ENCODE measurements at regions of chr15 and their contacts with region 1.

Region 1: DNA sequence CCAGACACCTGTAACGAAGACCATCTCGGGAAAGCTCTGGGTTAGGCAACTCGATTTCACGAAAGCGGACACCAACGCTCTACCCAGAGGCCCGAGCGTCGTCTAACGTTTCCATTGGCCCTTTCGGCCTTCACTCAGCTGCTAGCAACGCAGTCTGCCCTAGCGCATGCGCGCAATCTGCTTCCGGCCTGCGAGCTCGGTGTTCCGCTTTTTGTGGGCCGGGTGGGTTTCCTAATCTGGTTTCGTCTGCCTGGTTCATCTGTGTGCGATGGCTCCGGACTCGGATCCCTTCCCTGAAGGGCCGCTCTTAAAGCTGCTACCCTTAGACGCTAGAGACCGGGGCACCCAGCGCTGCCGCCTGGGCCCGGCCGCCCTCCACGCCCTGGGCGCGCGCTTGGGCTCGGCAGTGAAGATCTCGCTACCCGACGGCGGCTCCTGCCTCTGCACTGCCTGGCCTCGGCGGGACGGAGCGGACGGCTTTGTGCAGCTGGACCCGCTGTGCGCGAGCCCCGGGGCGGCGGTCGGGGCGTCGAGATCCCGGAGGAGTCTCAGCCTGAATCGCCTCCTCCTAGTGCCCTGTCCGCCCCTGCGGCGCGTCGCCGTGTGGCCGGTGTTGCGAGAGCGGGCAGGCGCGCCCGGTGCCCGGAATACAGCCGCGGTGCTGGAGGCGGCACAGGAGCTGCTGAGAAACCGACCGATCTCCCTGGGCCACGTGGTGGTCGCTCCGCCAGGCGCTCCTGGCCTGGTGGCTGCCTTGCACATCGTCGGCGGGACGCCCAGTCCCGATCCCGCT is 24.0 kb upstream of the GATM start:
- DNase-seq: peak; percentile 98
- ATAC-seq: peak; percentile 96
- H3K4me3 Mint-ChIP-seq: peak overlapping the region; percentile 97
- H3K27ac Mint-ChIP-seq: peak overlapping the region; percentile 86
- H3K4me1 Mint-ChIP-seq: peaks cover 29% of the 10 kb centered on the region
- H3K27me3 Mint-ChIP-seq: no peaks in the 10 kb centered on the region

Region 2: DNA sequence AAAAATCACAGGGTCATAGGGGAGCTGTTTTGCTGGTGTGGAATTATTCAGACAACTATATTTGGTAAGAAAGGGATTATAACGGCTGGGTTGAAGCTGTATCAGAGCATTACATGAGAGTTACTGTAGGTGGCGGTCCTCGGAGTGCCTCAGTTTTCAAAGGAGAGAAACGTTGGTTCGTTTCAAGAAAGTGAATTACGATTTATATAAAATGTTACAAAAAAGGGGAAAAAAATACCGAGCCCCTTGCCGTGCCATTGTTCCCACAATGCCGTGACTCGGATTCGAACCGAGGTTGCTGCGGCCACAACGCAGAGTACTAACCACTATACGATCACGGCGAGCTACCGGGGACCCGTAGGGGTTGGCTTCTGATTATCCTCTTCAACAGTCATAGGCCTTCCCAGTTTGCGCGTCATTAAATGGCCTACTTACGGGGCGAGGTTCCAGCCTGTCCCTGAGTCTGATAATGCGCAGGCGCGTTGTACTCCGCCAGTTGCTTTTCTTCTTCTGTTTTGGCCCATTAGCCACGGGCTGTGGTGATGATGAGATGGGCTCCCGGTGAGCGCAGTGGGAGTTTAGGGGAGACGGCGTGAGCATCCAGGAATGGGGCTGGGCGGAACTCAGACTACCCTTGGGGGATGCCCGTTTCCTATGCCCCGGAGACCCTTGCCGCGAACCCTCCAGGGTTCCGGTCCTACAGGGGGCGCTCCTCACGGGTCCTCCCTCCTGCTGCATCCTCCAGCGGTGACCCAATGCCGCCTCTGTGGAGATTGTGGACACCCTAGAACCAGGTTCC is 203.8 kb before region 1 on chr15:
- CTCF ChIA-PET with region 1: interaction called, 82 read pairs
- POLR2A ChIA-PET with region 1: interaction called, 25 read pairs
- DNase-seq: peak; percentile 97
- ATAC-seq: peak; percentile 74
- H3K4me3 Mint-ChIP-seq: no peak overlapping the region
- H3K27ac Mint-ChIP-seq: no peak overlapping the region
- H3K4me1 Mint-ChIP-seq: peaks cover 14% of the 10 kb centered on the region
- H3K27me3 Mint-ChIP-seq: peaks cover 2% of the 10 kb centered on the region

Region 3: GRCh38 chr15:45378149-45378912 is 24.0 kb before region 1 on chr15 and contains the start of gene GATM:
- CTCF ChIA-PET with region 1: interaction called, 16 read pairs
- POLR2A ChIA-PET with region 1: interaction called, 7 read pairs
- DNase-seq: peak; percentile 39
- ATAC-seq: peak; percentile 85
- H3K4me3 Mint-ChIP-seq: peak within 1 kb of the TSS; percentile 68
- H3K27ac Mint-ChIP-seq: no peak within 1 kb of the TSS
- H3K4me1 Mint-ChIP-seq: peaks cover 24% of the 10 kb centered on the region
- H3K27me3 Mint-ChIP-seq: peaks cover 57% of the 10 kb centered on the region
- total RNA-seq, gene GATM: 1.5 to 1.6 TPM

Region 4: DNA sequence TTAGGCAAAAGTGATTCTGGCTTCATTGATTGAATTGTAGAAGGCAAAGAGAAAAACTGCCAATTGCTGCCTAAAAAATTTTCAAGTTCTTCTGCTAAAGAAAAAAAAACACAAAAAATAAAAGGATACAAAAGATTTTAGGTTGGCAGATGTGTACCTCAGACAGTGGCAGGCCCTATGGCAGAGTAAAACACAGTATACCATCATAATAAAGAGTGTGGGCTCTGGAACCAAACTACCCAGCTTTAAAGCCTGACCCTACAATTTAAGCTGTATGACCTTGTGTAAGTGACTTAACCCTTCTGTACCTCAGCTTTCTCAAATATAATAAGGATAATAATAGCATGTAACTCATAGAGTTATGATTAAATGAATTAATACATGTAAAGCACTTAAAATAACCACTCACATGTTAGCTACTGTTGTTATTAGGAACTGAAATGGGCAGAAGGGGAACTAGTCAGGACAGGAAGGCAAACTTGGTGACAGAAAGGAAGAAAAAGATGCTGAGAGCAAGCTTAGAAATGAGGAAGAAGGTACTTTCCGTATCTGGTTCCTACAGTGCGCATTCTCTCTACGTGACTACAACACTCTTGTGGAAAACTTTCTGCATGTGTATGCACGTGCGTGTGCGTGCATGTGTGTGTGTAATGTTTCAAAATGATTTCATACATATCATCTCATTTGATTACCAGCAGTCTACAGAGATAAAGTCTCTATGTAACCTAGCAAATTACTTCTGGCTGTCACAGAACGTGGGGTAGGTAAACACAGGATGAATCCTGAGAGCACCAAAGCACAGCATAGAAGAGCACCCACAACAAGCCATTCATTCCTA is 10.4 kb before region 1 on chr15:
- CTCF ChIA-PET with region 1: interaction called, 15 read pairs
- POLR2A ChIA-PET with region 1: interaction called, 5 read pairs
- DNase-seq: no peak
- ATAC-seq: peak; percentile 5
- H3K4me3 Mint-ChIP-seq: no peak overlapping the region
- H3K27ac Mint-ChIP-seq: no peak overlapping the region
- H3K4me1 Mint-ChIP-seq: no peaks in the 10 kb centered on the region
- H3K27me3 Mint-ChIP-seq: peaks cover 20% of the 10 kb centered on the region

Region 5: GRCh38 chr15:45414215-45414885 is 12.0 kb after region 1 on chr15:
- CTCF ChIA-PET with region 1: interaction called, 7 read pairs
- POLR2A ChIA-PET with region 1: interaction called, 13 read pairs
- DNase-seq: no peak
- ATAC-seq: peak; percentile 44
- H3K4me3 Mint-ChIP-seq: no peak overlapping the region
- H3K27ac Mint-ChIP-seq: peak overlapping the region; percentile 57
- H3K4me1 Mint-ChIP-seq: peaks cover 17% of the 10 kb centered on the region
- H3K27me3 Mint-ChIP-seq: no peaks in the 10 kb centered on the region

Region 6: GRCh38 chr15:45594319-45594718 is 192.0 kb after region 1 on chr15:
- CTCF ChIA-PET with region 1: no interaction called
- POLR2A ChIA-PET with region 1: no interaction called
- DNase-seq: no peak
- ATAC-seq: no peak
- H3K4me3 Mint-ChIP-seq: no peak overlapping the region
- H3K27ac Mint-ChIP-seq: no peak overlapping the region
- H3K4me1 Mint-ChIP-seq: peaks cover 23% of the 10 kb centered on the region
- H3K27me3 Mint-ChIP-seq: no peaks in the 10 kb centered on the region

Region 7: GRCh38 chr15:45630917-45631691 is 228.7 kb after region 1 on chr15:
- CTCF ChIA-PET with region 1: no interaction called
- POLR2A ChIA-PET with region 1: no interaction called
- DNase-seq: no peak
- ATAC-seq: no peak
- H3K4me3 Mint-ChIP-seq: no peak overlapping the region
- H3K27ac Mint-ChIP-seq: no peak overlapping the region
- H3K4me1 Mint-ChIP-seq: peaks cover 14% of the 10 kb centered on the region
- H3K27me3 Mint-ChIP-seq: peaks cover 4% of the 10 kb centered on the region

Measured in activated CD8-positive, alpha-beta T cell treated with anti-CD3 and anti-CD28 coated beads, Interleukin-2, amount 10 ng/mL, durations not matched to agents 7 days and 5 days (primary cell).